ENCODE measurements at regions of chr4 and their contacts with region 1.

Region 1: GRCh38 chr4:173334085-173334772 is at the start of gene HMGB2:
- DNase-seq: peak; percentile 100
- H3K4me3 ChIP-seq: peak within 1 kb of the TSS; percentile 89 to 98 (median 94)
- H3K27ac ChIP-seq: peak within 1 kb of the TSS; percentile 93 to 100 (median 99)
- H3K4me1 ChIP-seq: peaks cover 0 to 31% (median 23%) of the 10 kb centered on the region in 4 donors
- H3K27me3 ChIP-seq: no peaks in the 10 kb centered on the region
- CTCF ChIP-seq: no peak
- EP300 ChIP-seq: peak in 1 of 4 donors; percentile 42
- POLR2A ChIP-seq: peak; percentile 99
- total RNA-seq, gene HMGB2: 45.1 to 74.7 (median 59.4) TPM

Region 2: DNA sequence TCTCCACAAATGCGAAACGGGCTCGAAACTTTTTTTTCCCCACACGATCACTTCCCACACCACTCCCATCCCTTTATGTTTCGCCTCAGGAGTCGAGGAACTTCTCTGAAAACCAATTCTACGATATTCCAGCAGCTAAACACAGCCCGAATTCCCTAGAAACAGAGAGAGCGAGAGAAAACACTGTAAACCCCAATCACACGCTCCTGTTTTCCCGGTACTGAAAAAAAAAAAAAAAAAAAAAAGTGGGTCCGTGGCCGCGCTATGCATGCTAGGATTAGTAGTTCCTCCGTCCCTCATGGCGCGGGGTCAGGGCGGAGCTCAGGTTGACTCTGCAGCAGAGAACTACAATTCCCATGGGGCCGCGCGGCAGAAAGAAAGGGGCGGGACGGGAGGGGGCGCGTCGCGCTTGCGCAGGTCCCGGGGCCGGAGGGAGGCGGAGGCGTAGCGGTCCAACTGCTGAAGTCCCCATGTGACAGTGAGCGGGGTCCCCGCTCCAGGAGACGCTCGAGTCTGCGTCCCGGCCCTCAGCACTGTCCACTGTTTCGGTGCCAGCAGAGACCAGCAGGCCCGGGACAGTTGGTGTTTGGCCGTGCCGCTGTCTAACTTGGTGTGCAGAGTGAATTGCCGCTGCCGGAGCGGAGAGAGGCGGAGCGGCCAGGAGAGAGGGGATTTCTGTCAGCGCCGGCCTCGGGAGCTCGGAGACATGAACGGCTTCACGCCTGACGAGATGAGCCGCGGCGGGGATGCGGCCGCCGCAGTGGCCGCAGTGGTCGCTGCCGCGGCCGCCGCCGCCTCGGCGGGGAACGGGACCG is 36.5 kb after region 1 on chr4 and contains the start of gene SAP30:
- intact Hi-C with region 1: loop called (anchors 1 kb)
- DNase-seq: peak; percentile 100
- H3K4me3 ChIP-seq: peak within 1 kb of the TSS; percentile 82 to 91 (median 90)
- H3K27ac ChIP-seq: peak within 1 kb of the TSS; percentile 94 to 98 (median 97)
- H3K4me1 ChIP-seq: peaks cover 0 to 52% (median 39%) of the 10 kb centered on the region in 4 donors
- H3K27me3 ChIP-seq: no peaks in the 10 kb centered on the region
- CTCF ChIP-seq: no peak
- EP300 ChIP-seq: peak in 1 of 4 donors; percentile 24
- POLR2A ChIP-seq: peak; percentile 99
- total RNA-seq, gene SAP30: 39.6 to 61.4 (median 53.1) TPM

Region 3: GRCh38 chr4:173494013-173494970 is 160.1 kb after region 1 on chr4:
- intact Hi-C with region 1: loop called (anchors 5 kb)
- DNase-seq: peak; percentile 87
- H3K4me3 ChIP-seq: peak overlapping the region; percentile 13 to 51 (median 49)
- H3K27ac ChIP-seq: peak overlapping the region in 3 of 4 donors; percentile 43 to 61 (median 51)
- H3K4me1 ChIP-seq: peaks cover 0 to 28% (median 23%) of the 10 kb centered on the region in 4 donors
- H3K27me3 ChIP-seq: no peaks in the 10 kb centered on the region
- CTCF ChIP-seq: peak; percentile 73 to 86 (median 78)
- EP300 ChIP-seq: no peak
- POLR2A ChIP-seq: no peak

Measured in sigmoid colon (tissue), 7 donors.